Naive thymus-derived CD4-positive, alpha-beta T cell (primary cell): ENCODE measurements at regions of chr12 and their contacts with region 1.

Region 1: DNA sequence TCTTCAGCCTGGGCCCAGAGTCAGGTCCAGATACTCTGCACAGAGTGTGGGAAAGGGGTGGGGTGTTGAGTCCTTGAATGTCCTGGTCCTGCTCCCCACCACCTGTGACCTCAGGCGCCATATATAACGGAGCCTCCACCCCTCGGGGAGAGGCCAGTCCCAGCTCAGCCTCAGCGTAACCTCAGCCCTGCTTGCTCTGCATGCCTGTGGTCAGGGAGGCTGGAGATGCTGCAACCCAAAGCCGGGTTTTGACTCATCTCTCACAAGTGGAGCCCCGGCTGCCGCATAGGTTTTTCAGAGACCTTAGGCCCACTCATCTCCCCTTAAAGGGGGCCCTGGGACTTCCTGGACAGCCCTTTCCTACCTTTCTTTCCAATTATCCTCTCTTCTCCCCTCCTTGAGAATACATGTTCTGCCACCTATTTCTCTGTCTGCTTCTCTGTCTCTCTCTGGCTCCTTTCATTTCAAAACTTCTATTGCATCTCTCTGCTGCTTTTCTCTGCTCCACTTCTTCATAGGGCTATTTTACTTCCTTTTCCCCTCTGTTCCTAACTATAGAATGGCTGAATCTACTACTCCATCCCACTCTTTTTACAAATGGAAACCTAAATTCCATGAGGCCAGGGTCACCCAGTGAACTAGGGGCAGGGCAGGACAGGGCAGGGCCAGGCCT is 1.2 kb downstream of the ITGB7 start:
- DNase-seq: peak in 1 of 9 donors; percentile 75
- ATAC-seq: peak; percentile 68
- H3K4me3 ChIP-seq: peak overlapping the region; percentile 84
- H3K4me3 Mint-ChIP-seq: peak overlapping the region; percentile 83 to 92 (median 86)
- H3K27ac ChIP-seq: peak overlapping the region; percentile 85
- H3K27ac Mint-ChIP-seq: peak overlapping the region; percentile 61 to 90 (median 87)
- H3K4me1 ChIP-seq: peaks cover 63 to 73% of the 10 kb centered on the region in 2 donors
- H3K4me1 Mint-ChIP-seq: peaks cover 53 to 84% (median 71%) of the 10 kb centered on the region in 7 donors
- H3K27me3 ChIP-seq: no peaks in the 10 kb centered on the region
- H3K27me3 Mint-ChIP-seq: no peaks in the 10 kb centered on the region

Region 2: GRCh38 chr12:52847335-52848102 is 358.4 kb before region 1 on chr12:
- CTCF ChIA-PET with region 1: no interaction called
- POLR2A ChIA-PET with region 1: no interaction called
- intact Hi-C with region 1: no loop called
- DNase-seq: no peak
- ATAC-seq: no peak
- H3K4me3 ChIP-seq: no peak overlapping the region
- H3K4me3 Mint-ChIP-seq: no peak overlapping the region
- H3K27ac ChIP-seq: no peak overlapping the region
- H3K27ac Mint-ChIP-seq: no peak overlapping the region
- H3K4me1 ChIP-seq: no peaks in the 10 kb centered on the region
- H3K4me1 Mint-ChIP-seq: peaks cover 0 to 2% (median 1%) of the 10 kb centered on the region in 7 donors
- H3K27me3 ChIP-seq: no peaks in the 10 kb centered on the region
- H3K27me3 Mint-ChIP-seq: peaks cover 0 to 10% (median 0%) of the 10 kb centered on the region in 5 donors

Region 3: DNA sequence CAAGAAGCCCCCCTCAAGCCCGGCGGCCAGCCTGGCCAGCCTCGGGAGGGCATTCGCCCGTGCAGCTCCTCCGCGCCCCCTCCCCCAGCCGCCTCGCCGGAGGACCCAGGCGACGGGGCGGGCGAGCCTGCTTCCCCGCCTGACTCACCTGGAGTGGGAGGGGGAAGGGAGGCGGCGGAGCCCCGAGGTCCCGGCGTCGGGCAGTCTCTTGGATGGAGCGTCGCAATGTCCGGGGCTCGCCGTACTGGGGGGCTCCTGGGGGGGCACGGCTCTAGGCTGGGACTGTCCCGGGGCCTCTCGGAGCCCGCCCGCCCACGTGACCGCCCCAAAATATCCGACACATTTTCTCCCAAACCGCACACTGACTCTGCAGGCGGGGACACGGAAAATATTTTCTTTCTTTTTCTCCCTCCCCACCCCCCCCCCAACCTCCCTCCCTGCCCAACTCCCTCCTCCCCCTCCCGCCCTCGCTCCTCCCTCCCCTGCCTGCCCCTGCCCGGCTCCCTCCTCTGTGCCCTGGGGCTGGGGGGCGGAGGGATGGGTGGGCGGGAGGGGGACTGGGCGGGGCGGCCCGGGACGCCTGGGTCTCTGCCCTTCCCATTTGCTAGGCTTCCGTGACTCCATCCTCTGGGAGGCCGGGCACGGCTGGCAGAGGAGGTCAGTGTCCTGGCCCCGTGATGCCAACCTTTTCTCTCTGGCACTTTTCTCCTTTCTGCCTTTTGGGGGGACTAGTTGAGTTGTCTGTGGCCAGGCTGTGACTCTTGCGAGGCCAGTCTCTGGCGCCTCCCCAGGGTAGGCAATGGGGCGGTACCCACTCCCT is 26.2 kb after region 1 on chr12 and contains the start of gene RARG:
- CTCF ChIA-PET with region 1: no interaction called
- POLR2A ChIA-PET with region 1: interaction called, 13 read pairs
- intact Hi-C with region 1: no loop called
- DNase-seq: peak in 3 of 9 donors; percentile 33 to 78 (median 58)
- ATAC-seq: peak; percentile 74
- H3K4me3 ChIP-seq: peak within 1 kb of the TSS; percentile 52
- H3K4me3 Mint-ChIP-seq: peak within 1 kb of the TSS; percentile 83 to 95 (median 88)
- H3K27ac ChIP-seq: peak within 1 kb of the TSS; percentile 56
- H3K27ac Mint-ChIP-seq: peak within 1 kb of the TSS; percentile 77 to 90 (median 86)
- H3K4me1 ChIP-seq: peaks cover 40% of the 10 kb centered on the region in 2 donors
- H3K4me1 Mint-ChIP-seq: peaks cover 38 to 76% (median 67%) of the 10 kb centered on the region in 7 donors
- H3K27me3 ChIP-seq: no peaks in the 10 kb centered on the region
- H3K27me3 Mint-ChIP-seq: no peaks in the 10 kb centered on the region
- total RNA-seq, gene RARG: 22.4 to 73.1 (median 57.4) TPM

Region 4: GRCh38 chr12:53344824-53345485 is 139.1 kb after region 1 on chr12:
- CTCF ChIA-PET with region 1: no interaction called
- POLR2A ChIA-PET with region 1: no interaction called
- intact Hi-C with region 1: no loop called
- DNase-seq: peak; percentile 42 to 68 (median 63)
- ATAC-seq: peak; percentile 89
- H3K4me3 ChIP-seq: peak overlapping the region; percentile 79
- H3K4me3 Mint-ChIP-seq: peak overlapping the region; percentile 91 to 100 (median 97)
- H3K27ac ChIP-seq: peak overlapping the region; percentile 66
- H3K27ac Mint-ChIP-seq: peak overlapping the region; percentile 87 to 96 (median 91)
- H3K4me1 ChIP-seq: peaks cover 0 to 10% of the 10 kb centered on the region in 2 donors
- H3K4me1 Mint-ChIP-seq: peaks cover 11 to 25% (median 17%) of the 10 kb centered on the region in 7 donors
- H3K27me3 ChIP-seq: no peaks in the 10 kb centered on the region
- H3K27me3 Mint-ChIP-seq: peaks cover 0 to 13% (median 0%) of the 10 kb centered on the region in 5 donors